Activated T-helper 1 cell treated with anti-CD3 and anti-CD28 coated beads, Interleukin-12 subunit alpha, Interleukin-12 subunit beta, Interleukin-2, Interleukin-4 antibody, amounts not matched to agents 30 ng/mL and 10 ng/mL and 1 ng/mL, durations not matched to agents 14 hours and 24 hours and 36 hours (primary cell): ENCODE measurements at regions of chr5 and their contacts with region 1.

Region 1: DNA sequence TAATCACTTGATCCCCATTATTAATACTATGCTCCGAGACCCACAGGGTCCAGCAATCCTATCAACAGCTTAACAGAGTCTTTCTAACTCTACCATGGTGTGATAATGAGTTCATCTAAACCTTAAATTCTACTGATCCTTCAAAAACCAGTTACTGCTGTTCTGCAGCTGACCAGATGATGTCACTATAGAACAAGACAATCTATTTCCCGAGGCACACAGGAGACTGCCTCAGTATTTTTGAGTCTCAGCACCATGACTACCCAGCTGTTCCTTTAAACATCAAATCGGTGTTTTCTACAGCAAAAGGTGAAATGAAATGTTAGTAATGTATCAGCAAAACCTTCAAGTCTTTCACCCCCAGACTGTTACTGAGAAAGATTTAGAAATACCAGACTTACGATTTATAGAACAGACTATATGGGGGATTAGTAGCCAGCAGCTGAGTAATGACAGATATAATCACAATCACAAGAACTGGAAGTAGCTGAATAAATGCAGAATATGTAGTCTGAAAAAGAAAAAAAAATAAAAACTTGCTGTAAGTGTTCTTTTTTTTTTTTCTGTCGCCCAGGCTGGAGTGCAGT is 16.9 kb downstream of the DNAJC18 start:
- DNase-seq: peak; percentile 54
- H3K4me3 Mint-ChIP-seq: no peak overlapping the region
- H3K27ac Mint-ChIP-seq: peak overlapping the region; percentile 26
- H3K4me1 Mint-ChIP-seq: peaks cover 22% of the 10 kb centered on the region
- H3K27me3 Mint-ChIP-seq: no peaks in the 10 kb centered on the region

Region 2: GRCh38 chr5:139439013-139439903 is 16.9 kb after region 1 on chr5 and contains the start of gene DNAJC18:
- intact Hi-C with region 1: loop called (anchors 1 kb)
- DNase-seq: peak; percentile 86
- H3K4me3 Mint-ChIP-seq: peak within 1 kb of the TSS; percentile 95
- H3K27ac Mint-ChIP-seq: peak within 1 kb of the TSS; percentile 99
- H3K4me1 Mint-ChIP-seq: peaks cover 66% of the 10 kb centered on the region
- H3K27me3 Mint-ChIP-seq: no peaks in the 10 kb centered on the region
- total RNA-seq, gene DNAJC18: 30.0 and 36.3 TPM in 2 replicates

Region 3: DNA sequence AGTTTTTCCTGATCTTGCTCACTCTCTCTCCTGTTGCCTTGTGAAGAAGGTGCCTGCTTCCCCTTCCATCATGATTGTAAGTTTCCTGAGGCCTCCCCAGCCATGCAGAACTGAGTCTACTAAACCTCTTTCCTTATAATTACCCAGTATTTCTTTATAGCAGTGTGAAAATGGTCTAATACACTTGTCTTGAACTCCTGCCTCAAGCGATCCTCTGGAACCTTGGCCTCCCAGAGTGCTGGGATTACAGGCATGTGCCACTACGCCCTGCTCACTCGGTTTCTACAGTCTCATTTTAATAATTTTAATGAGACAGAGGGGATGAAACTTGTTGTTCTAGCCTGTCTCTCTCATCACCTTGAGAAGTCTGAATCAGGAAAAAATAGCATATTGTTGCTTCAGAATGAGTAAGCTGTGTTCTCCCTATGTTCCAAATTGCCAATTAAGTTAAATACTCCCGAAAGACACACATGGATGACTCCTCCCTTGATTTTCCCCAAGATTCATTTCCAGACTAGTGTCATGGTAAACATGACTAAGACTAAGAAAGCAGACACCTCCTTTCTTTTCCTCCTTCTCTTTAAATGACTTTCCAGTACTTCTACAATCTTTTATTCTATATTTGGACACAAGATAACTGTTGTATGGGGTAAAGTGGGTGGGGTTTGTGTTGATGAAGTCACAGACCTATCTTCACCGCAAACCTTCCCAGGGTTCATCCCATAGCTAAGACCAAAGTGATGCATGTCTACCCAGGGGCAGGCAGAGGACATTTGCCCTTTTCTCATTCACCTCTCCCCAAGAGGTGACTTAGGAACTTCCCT is 24.8 kb after region 1 on chr5:
- intact Hi-C with region 1: loop called (anchors 1 kb)
- DNase-seq: no peak
- H3K4me3 Mint-ChIP-seq: peak overlapping the region; percentile 46
- H3K27ac Mint-ChIP-seq: peak overlapping the region; percentile 98
- H3K4me1 Mint-ChIP-seq: peaks cover 64% of the 10 kb centered on the region
- H3K27me3 Mint-ChIP-seq: no peaks in the 10 kb centered on the region

Region 4: GRCh38 chr5:139482050-139482889 is 59.9 kb after region 1 on chr5 and contains the start of gene STING1:
- intact Hi-C with region 1: loop called (anchors 1 kb)
- DNase-seq: peak; percentile 57
- H3K4me3 Mint-ChIP-seq: peak within 1 kb of the TSS; percentile 90
- H3K27ac Mint-ChIP-seq: peak within 1 kb of the TSS; percentile 88
- H3K4me1 Mint-ChIP-seq: peaks cover 45% of the 10 kb centered on the region
- H3K27me3 Mint-ChIP-seq: no peaks in the 10 kb centered on the region
- total RNA-seq, gene STING1: 213 and 226 TPM in 2 replicates

Region 5: GRCh38 chr5:139574641-139575312 is 152.4 kb after region 1 on chr5:
- intact Hi-C with region 1: loop called (anchors 5 kb)
- DNase-seq: no peak
- H3K4me3 Mint-ChIP-seq: no peak overlapping the region
- H3K27ac Mint-ChIP-seq: no peak overlapping the region
- H3K4me1 Mint-ChIP-seq: peaks cover 64% of the 10 kb centered on the region
- H3K27me3 Mint-ChIP-seq: no peaks in the 10 kb centered on the region

Region 6: DNA sequence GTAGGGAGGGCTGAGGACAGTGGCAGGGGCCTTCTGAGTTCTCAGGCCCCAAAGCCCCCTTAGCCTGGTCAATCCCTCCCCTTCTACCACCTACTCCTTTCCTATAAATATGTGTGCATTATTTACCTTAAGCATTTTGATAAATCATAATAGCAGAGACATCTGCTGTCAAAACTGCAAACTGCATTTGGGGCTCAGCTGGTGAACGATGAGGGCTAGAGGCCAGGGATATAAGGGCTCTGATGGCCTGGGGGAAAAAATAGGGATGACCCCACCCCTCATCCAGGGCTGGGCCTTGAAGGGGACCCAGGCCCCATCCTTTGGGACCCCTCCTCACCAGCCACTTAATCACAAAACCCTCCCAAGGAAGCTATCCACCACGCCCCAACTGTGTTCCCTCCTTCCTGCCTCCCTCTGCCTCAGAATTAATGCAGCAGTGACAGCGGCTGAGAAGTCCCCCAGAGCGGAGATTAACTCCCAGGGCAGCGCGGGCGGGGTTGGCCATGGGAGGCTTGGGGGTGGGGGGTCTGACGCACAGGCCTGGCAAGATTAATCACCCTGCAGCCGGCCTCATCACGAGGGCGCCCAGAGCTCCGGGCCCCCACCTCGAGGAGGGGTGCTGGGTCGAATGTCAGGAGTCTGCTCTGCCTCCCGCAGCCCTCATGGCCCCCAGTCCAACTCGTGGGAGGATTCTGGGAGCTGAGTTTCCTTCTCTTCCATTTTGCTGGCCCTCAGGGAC is 267.8 kb after region 1 on chr5:
- intact Hi-C with region 1: loop called (anchors 5 kb)
- DNase-seq: no peak
- H3K4me3 Mint-ChIP-seq: no peak overlapping the region
- H3K27ac Mint-ChIP-seq: no peak overlapping the region
- H3K4me1 Mint-ChIP-seq: no peaks in the 10 kb centered on the region
- H3K27me3 Mint-ChIP-seq: peaks cover 2% of the 10 kb centered on the region

Region 7: GRCh38 chr5:139765409-139766217 is 343.2 kb after region 1 on chr5:
- intact Hi-C with region 1: loop called (anchors 1 kb)
- DNase-seq: peak; percentile 68
- H3K4me3 Mint-ChIP-seq: peak overlapping the region; percentile 75
- H3K27ac Mint-ChIP-seq: peak overlapping the region; percentile 47
- H3K4me1 Mint-ChIP-seq: peaks cover 14% of the 10 kb centered on the region
- H3K27me3 Mint-ChIP-seq: peaks cover 46% of the 10 kb centered on the region